ENCODE measurements at regions of chr17 and their contacts with region 1.

Region 1: GRCh38 chr17:50478391-50479381 is at the start of gene RSAD1:
- DNase-seq: peak; percentile 91
- ATAC-seq: peak; percentile 90
- H3K4me3 ChIP-seq: peak within 1 kb of the TSS; percentile 71 to 83 (median 82)
- H3K27ac ChIP-seq: peak within 1 kb of the TSS; percentile 80
- H3K4me1 ChIP-seq: peaks cover 52% of the 10 kb centered on the region
- H3K27me3 ChIP-seq: no peaks in the 10 kb centered on the region
- CTCF ChIP-seq: peak; percentile 83
- EP300 ChIP-seq: peak in 1 of 2 experiments; percentile 25; a peak in 3 of 4 replicates
- POLR2A ChIP-seq: peak; percentile 89 to 92
- RAD21 ChIP-seq: peak; percentile 100
- total RNA-seq, gene RSAD1: 16.0 and 22.7 TPM in 2 replicates

Region 2: GRCh38 chr17:50397111-50397918 is 81.4 kb before region 1 on chr17 and contains the start of gene LRRC59:
- CTCF ChIA-PET with region 1: interaction called, 43 read pairs
- POLR2A ChIA-PET with region 1: interaction called, 28 read pairs
- in situ Hi-C with region 1: loop called (anchors 5 kb)
- intact Hi-C with region 1: loop called (anchors 1 kb)
- DNase-seq: peak; percentile 81
- ATAC-seq: peak; percentile 93
- H3K4me3 ChIP-seq: peak within 1 kb of the TSS; percentile 73 to 99 (median 99)
- H3K27ac ChIP-seq: peak within 1 kb of the TSS; percentile 85
- H3K4me1 ChIP-seq: peaks cover 27% of the 10 kb centered on the region
- H3K27me3 ChIP-seq: peaks cover 0 to 3% of the 10 kb centered on the region in 2 experiments; a peak in 1 of 5 replicates
- CTCF ChIP-seq: peak; percentile 100
- EP300 ChIP-seq: peak; percentile 56 to 73; a peak in 3 of 4 replicates
- POLR2A ChIP-seq: peak; percentile 91 to 96
- RAD21 ChIP-seq: peak; percentile 92
- total RNA-seq, gene LRRC59: 222 and 239 TPM in 2 replicates

Region 3: DNA sequence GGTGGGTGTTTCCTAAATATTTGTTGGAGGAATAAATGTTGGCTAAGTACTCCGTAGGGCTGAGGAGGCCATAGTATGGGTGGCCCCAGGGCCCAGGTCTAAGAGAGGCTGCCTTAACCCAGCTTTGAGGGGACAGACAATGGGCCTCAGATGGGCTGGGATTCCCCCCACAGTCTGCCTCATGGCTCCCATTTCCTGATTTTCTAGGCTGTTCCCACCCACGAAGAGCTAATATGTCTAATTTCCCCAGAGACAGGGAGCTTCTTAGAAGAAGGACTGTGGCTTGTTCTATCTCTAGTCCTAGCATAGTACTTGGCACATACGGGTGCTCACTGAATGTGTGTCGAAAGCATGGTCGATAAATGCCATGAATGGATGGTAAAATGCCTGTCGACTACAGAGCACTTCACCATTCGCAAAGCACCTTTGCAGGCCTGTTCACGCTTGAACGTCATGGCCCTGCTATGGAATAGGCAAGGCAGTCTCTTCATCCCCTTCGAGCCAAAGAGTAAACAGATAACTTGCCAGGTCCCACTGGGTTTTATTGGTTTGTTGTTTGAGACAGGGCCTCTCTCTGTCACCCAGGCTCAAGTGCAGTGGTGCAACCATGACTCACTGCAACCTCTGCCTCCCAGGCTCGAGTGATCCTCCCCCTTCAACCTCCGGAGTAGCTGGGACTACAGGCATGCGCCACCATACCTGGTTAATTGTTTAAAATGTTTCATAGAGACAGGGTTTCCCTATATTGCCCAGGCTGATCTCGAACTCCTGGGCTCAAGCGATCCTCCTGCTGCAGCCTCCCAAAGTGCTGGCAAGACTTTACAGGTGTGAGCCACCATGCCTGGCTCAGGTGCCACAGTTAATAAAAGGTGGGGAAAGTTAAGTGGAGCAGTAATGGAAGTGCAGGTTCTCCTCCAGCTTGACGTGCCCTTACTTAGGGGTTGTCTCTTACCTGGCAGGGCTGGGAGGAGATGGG is 19.7 kb before region 1 on chr17:
- CTCF ChIA-PET with region 1: no interaction called
- POLR2A ChIA-PET with region 1: interaction called, 10 read pairs
- in situ Hi-C with region 1: no loop called
- intact Hi-C with region 1: no loop called
- DNase-seq: peak; percentile 95
- ATAC-seq: peak; percentile 89
- H3K4me3 ChIP-seq: peak overlapping the region in 1 of 3 experiments; percentile 18; a peak in 1 of 6 replicates
- H3K27ac ChIP-seq: peak overlapping the region; percentile 41
- H3K4me1 ChIP-seq: peaks cover 24% of the 10 kb centered on the region
- H3K27me3 ChIP-seq: no peaks in the 10 kb centered on the region
- CTCF ChIP-seq: peak; percentile 26
- EP300 ChIP-seq: peak; percentile 39 to 57; a peak in 2 of 4 replicates
- POLR2A ChIP-seq: peak; percentile 20 to 31; a peak in 2 of 4 replicates
- RAD21 ChIP-seq: no peak

Region 4: GRCh38 chr17:50507871-50508572 is 29.3 kb after region 1 on chr17 and contains the start of gene MYCBPAP:
- CTCF ChIA-PET with region 1: no interaction called
- POLR2A ChIA-PET with region 1: no interaction called
- in situ Hi-C with region 1: no loop called
- intact Hi-C with region 1: no loop called
- DNase-seq: no peak
- ATAC-seq: no peak
- H3K4me3 ChIP-seq: no peak within 1 kb of the TSS
- H3K27ac ChIP-seq: no peak within 1 kb of the TSS
- H3K4me1 ChIP-seq: peaks cover 46% of the 10 kb centered on the region
- H3K27me3 ChIP-seq: peaks cover 0 to 8% of the 10 kb centered on the region in 2 experiments; a peak in 2 of 5 replicates
- CTCF ChIP-seq: no peak
- EP300 ChIP-seq: no peak
- POLR2A ChIP-seq: no peak
- RAD21 ChIP-seq: no peak
- total RNA-seq, gene MYCBPAP: 0.24 and 0.36 TPM in 2 replicates

Region 5: GRCh38 chr17:50541716-50542688 is 63.3 kb after region 1 on chr17:
- CTCF ChIA-PET with region 1: no interaction called
- POLR2A ChIA-PET with region 1: interaction called, 16 read pairs
- in situ Hi-C with region 1: no loop called
- intact Hi-C with region 1: loop called (anchors 1 kb)
- DNase-seq: peak; percentile 81
- ATAC-seq: peak; percentile 69
- H3K4me3 ChIP-seq: peak overlapping the region; percentile 73 to 87 (median 78)
- H3K27ac ChIP-seq: peak overlapping the region; percentile 97
- H3K4me1 ChIP-seq: peaks cover 80% of the 10 kb centered on the region
- H3K27me3 ChIP-seq: no peaks in the 10 kb centered on the region; a peak in 1 of 5 replicates
- CTCF ChIP-seq: peak; percentile 54; the same call in 1 of the 2 replicates
- EP300 ChIP-seq: 0 out of 4 replicates have a peak, but pooled peaks of 1 of the 2 experiments have one; percentile 5
- POLR2A ChIP-seq: peak; percentile 90
- RAD21 ChIP-seq: peak; percentile 69; the same call in 1 of the 2 replicates

Region 6: DNA sequence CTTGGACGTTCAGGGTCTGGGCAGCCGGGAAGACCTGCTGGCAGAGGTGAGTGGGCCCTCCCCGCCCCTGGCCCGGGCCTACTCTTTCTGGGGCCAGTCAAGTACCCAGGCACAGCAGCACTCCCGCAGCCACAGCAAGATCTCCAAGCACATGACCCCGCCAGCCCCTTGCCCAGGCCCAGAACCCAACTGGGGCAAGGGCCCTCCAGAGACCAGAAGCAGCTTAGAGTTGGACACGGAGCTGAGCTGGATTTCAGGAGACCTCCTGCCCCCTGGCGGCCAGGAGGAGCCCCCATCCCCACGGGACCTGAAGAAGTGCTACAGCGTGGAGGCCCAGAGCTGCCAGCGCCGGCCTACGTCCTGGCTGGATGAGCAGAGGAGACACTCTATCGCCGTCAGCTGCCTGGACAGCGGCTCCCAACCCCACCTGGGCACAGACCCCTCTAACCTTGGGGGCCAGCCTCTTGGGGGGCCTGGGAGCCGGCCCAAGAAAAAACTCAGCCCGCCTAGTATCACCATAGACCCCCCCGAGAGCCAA is 147.4 kb after region 1 on chr17:
- CTCF ChIA-PET with region 1: interaction called, 16 read pairs
- POLR2A ChIA-PET with region 1: interaction called, 5 read pairs
- in situ Hi-C with region 1: loop called (anchors 5 kb)
- intact Hi-C with region 1: loop called (anchors 1 kb)
- DNase-seq: peak; percentile 84
- ATAC-seq: peak; percentile 82
- H3K4me3 ChIP-seq: peak overlapping the region; percentile 40 to 74 (median 45); a peak in 5 of 6 replicates
- H3K27ac ChIP-seq: no peak overlapping the region
- H3K4me1 ChIP-seq: peaks cover 63% of the 10 kb centered on the region
- H3K27me3 ChIP-seq: peaks cover 0 to 34% of the 10 kb centered on the region in 2 experiments; a peak in 4 of 5 replicates
- CTCF ChIP-seq: peak; percentile 99
- EP300 ChIP-seq: no peak
- POLR2A ChIP-seq: no peak
- RAD21 ChIP-seq: peak; percentile 97

Region 7: GRCh38 chr17:50697663-50698274 is 219.1 kb after region 1 on chr17:
- CTCF ChIA-PET with region 1: no interaction called
- POLR2A ChIA-PET with region 1: interaction called, 6 read pairs
- in situ Hi-C with region 1: loop called (anchors 5 kb)
- intact Hi-C with region 1: loop called (anchors 1 kb)
- DNase-seq: no peak
- ATAC-seq: no peak
- H3K4me3 ChIP-seq: no peak overlapping the region
- H3K27ac ChIP-seq: no peak overlapping the region
- H3K4me1 ChIP-seq: peaks cover 34% of the 10 kb centered on the region
- H3K27me3 ChIP-seq: no peaks in the 10 kb centered on the region
- CTCF ChIP-seq: peak; percentile 66
- EP300 ChIP-seq: no peak
- POLR2A ChIP-seq: no peak
- RAD21 ChIP-seq: peak; percentile 39; the same call in 1 of the 2 replicates

Measured in HepG2 (cell line).